ENCODE measurements at regions of chr11 and their contacts with region 1.

Region 1: GRCh38 chr11:69101115-69101791 is 52.5 kb downstream of the TPCN2 start:
- DNase-seq: peak; percentile 70 to 82 (median 76)
- H3K4me3 ChIP-seq: no peak overlapping the region
- H3K27ac ChIP-seq: no peak overlapping the region
- H3K4me1 ChIP-seq: no peaks in the 10 kb centered on the region
- H3K27me3 ChIP-seq: no peaks in the 10 kb centered on the region
- CTCF ChIP-seq: peak; percentile 91 to 99 (median 97)
- POLR2A ChIP-seq: no peak

Region 2: DNA sequence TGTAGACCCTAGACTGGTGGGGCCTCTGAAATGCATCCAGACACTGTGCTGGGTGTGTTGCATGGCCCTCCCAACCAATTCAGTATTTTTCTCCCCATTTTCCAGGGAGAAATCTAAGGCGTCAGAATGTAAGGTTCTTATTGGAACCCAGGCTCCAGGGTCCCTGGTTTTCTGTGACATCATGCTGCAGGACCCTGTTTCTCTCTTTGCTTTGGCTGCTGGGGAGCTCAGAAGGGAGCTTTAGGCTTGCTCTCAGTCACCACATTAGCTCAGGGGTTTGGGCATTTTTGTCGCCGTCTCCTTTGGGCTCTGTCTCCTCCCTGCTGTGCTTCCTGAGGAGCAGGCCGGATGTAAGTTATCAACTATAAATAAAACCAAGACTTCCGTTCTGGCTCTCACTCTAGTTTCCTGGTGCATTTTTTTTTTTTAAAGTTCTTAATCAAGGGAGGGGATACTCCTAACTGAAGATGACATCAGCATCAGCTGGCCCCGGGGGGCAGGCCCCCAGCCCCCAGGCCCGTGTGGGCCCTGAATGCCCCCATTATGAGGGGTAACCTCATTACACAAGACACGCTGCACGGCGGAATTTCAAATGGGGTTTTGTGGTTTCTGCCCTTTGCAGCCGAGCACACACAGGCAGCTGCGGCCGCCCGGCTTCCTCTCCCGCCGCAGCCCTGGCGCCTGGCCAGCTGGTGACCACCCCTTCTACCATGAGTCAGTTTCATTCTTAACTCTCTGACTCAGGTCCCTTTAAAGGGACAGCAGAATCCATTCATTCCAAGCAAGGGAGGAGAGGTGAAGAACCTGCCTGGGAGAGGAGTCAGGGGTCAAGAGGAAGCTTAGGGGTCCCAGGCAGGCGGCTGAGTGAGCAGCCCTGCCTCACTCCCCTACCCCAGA is 195.9 kb after region 1 on chr11:
- intact Hi-C with region 1: loop called in 1 of 2 experiments (anchors 10 kb)
- DNase-seq: peak; percentile 91 to 97 (median 95)
- H3K4me3 ChIP-seq: peak overlapping the region in 1 of 4 donors; percentile 42
- H3K27ac ChIP-seq: peak overlapping the region; percentile 58 to 87 (median 85)
- H3K4me1 ChIP-seq: peaks cover 30% of the 10 kb centered on the region in 2 donors
- H3K27me3 ChIP-seq: no peaks in the 10 kb centered on the region
- CTCF ChIP-seq: no peak
- POLR2A ChIP-seq: peak in 1 of 2 donors; percentile 20

Region 3: GRCh38 chr11:69888483-69889076 is 787.3 kb after region 1 on chr11:
- intact Hi-C with region 1: loop called in 1 of 2 experiments (anchors 10 kb)
- DNase-seq: peak; percentile 54 to 85 (median 70)
- H3K4me3 ChIP-seq: no peak overlapping the region
- H3K27ac ChIP-seq: no peak overlapping the region
- H3K4me1 ChIP-seq: peaks cover 6 to 21% of the 10 kb centered on the region in 2 donors
- H3K27me3 ChIP-seq: no peaks in the 10 kb centered on the region
- CTCF ChIP-seq: peak; percentile 66 to 88 (median 79)
- POLR2A ChIP-seq: no peak

Measured in adrenal gland (tissue), 19 donors.